ENCODE measurements at regions of chr7 and their contacts with region 1.

Region 1: DNA sequence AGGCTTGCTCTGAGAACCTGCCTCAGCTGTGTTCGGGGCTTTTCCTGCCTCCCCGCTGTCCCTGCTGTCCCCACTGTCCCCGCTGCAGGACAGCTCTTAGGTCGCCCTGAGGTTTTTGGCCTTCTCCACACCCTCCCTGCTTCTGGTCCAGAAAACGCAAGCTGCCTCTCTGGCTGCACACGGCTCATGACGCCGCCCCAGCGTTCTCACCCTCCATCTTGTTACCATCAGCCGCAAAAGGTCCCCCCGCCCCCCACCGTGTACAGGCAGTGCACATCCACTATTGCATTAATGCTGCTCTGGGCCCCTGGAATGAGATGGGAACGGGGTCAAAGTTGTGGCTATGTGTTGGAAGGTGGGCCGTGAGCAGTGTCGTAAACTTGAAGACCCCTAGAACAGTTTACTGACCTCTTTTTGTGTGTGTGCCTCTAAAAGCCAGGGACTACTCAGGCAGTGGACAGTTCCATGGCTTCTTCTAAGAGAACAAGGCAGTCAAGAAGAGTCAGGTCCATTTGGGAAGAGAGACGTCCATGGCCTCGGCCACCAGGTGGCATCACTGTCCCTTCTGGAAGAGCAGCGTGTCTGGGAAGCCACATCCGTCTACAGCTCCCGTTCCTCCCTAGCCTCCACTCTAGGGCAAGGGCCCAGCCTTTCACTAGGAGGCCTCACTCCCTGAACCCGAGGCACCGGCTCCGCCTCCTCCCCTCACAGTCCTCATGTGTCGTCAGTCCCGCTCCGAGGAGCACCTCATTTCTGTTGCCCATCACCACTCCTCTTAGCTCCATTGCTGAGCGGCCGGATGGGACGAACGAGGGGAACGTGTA is 38.5 kb upstream of the MKRN1 start:
- DNase-seq: peak; percentile 95
- ATAC-seq: peak; percentile 93
- H3K4me3 Mint-ChIP-seq: no peak overlapping the region
- H3K27ac Mint-ChIP-seq: peak overlapping the region; percentile 76
- H3K4me1 Mint-ChIP-seq: peaks cover 20% of the 10 kb centered on the region
- H3K27me3 Mint-ChIP-seq: no peaks in the 10 kb centered on the region
- CTCF ChIP-seq: peak; percentile 80

Region 2: DNA sequence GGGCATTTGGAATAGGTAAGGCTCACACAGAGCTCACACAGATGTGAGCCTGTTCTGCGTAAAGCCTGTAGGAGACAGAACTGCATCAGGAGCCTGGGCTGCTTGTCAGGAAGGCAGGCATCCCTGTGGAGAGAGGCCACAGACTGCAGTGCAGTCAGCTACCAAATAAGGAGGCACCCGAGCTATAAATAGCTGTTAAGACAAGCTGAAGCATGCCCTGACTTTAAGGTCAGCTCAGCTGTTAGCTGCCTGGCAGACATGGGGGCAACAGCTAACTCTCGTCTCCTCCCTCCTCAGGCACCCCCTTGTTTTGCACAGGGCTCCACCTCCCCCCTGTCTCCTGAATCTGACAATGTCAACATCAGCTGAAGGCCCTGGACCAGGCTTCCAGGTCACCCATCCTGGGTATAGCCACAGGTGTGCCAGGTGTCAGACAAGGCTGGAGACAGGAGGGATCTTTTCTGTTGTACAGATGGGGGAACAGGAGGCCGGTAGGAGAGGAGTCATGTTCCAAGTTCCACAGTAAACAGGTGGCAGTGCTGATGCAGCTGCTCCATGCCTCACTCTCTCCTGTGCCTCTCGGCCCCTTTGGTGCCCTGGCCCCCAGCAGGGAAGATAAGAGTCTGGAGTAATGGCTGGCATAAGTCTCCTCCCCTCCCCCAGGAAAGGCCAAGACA is 10.8 kb before region 1 on chr7:
- CTCF ChIA-PET with region 1: interaction called, 12 read pairs
- POLR2A ChIA-PET with region 1: interaction called, 3 read pairs
- DNase-seq: no peak
- ATAC-seq: peak; percentile 94
- H3K4me3 Mint-ChIP-seq: no peak overlapping the region
- H3K27ac Mint-ChIP-seq: 0 out of 2 replicates have a peak overlapping the region, but pooled peaks have one; percentile 63
- H3K4me1 Mint-ChIP-seq: peaks cover 19% of the 10 kb centered on the region
- H3K27me3 Mint-ChIP-seq: no peaks in the 10 kb centered on the region
- CTCF ChIP-seq: no peak

Region 3: GRCh38 chr7:140625908-140626868 is 108.4 kb after region 1 on chr7:
- CTCF ChIA-PET with region 1: interaction called, 12 read pairs
- POLR2A ChIA-PET with region 1: interaction called, 5 read pairs
- DNase-seq: peak; percentile 72
- ATAC-seq: peak; percentile 81
- H3K4me3 Mint-ChIP-seq: no peak overlapping the region
- H3K27ac Mint-ChIP-seq: peak overlapping the region; percentile 96
- H3K4me1 Mint-ChIP-seq: peaks cover 27% of the 10 kb centered on the region
- H3K27me3 Mint-ChIP-seq: no peaks in the 10 kb centered on the region
- CTCF ChIP-seq: no peak

Region 4: DNA sequence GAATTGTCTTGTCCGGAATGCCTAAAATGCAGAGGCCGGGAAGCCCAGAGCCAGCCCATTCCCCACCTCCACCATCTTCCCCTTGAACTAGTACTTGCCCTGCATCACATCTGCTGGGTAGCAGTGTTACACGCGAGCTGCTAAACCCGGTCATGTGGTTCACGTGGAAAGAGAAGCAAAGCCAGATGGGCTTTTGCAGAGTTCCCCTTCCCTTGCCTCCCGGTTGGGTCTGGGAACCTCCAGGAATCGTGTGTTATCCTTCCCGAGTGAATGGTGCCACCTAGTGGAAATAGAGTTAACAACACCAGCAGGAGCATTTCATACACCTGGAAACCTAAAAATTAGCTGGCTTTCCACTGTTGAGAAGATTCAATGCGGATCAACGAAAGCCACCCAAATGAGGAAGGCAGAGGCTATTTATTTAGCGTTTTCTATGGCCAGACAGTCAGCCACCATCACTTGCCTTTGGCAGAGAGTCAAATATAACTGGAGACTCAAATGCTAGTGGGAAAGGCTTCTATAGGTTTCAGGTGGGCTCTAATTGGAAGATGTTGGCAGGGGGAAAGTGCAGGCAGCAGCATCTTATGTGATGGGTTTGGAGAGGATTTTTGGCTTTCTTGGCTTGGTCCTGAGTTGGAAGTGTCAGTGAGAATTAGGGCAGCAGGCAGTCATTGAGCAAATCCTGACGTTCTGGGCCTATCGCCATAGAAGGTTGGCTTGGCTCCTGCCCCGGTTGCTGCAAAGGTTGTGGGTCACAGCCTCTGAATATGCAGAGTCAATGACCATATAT is 135.8 kb after region 1 on chr7:
- CTCF ChIA-PET with region 1: interaction called, 55 read pairs
- POLR2A ChIA-PET with region 1: no interaction called
- DNase-seq: peak; percentile 66
- ATAC-seq: peak; percentile 90
- H3K4me3 Mint-ChIP-seq: no peak overlapping the region
- H3K27ac Mint-ChIP-seq: no peak overlapping the region
- H3K4me1 Mint-ChIP-seq: peaks cover 11% of the 10 kb centered on the region; the same call in 1 of the 2 replicates
- H3K27me3 Mint-ChIP-seq: no peaks in the 10 kb centered on the region
- CTCF ChIP-seq: peak; percentile 74

Region 5: GRCh38 chr7:140754506-140754905 is 236.7 kb after region 1 on chr7:
- CTCF ChIA-PET with region 1: no interaction called
- POLR2A ChIA-PET with region 1: no interaction called
- DNase-seq: no peak
- ATAC-seq: no peak
- H3K4me3 Mint-ChIP-seq: no peak overlapping the region
- H3K27ac Mint-ChIP-seq: 0 out of 2 replicates have a peak overlapping the region, but pooled peaks have one; percentile 51
- H3K4me1 Mint-ChIP-seq: peaks cover 13% of the 10 kb centered on the region
- H3K27me3 Mint-ChIP-seq: no peaks in the 10 kb centered on the region
- CTCF ChIP-seq: no peak